BJ (cell line): ENCODE measurements at regions of chr20 and their contacts with region 1.

Region 1: DNA sequence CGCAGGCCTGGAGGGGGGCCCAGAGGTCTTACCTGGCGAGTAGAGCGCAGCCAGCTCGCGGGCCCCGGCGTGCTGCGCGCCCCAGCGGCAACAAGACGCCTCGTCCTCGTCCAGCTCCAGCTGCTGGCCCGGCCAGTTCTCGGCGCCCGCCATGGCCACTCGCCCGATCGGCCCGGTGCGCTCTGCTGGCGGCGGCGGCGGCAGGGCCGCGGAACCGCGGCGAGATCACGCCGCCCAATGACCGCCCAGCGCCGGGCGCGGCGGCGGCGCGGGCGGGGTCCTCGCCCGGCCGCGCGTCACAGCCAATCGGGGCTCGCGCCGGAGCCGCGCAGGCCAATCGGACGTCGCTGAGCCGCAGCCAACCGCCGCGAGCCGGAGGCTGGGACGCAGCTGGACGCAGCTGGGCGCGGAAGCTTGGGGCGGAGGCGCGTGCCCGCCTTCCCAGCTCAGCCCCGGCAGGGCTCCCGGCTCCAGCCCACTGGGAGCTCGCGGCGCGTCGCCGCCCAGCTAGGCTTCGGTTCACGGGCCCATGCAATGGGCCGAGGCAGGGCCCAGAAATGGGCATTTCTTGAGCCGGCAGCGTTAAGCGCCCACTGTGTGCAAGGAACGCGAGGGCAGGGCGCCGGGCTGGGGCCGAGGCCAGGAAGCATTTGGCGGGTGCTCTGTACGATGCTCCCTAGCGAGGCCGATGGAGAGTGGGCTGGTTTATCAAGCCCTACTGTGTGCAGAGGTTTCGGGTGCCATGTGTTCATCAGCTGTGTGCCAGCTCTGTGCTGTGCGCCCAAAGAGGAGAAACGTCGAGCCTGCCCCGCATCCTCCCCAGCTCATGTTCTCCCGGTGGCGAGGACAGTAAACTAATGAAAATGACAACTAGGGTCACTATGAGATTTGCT is at the start of gene PEDS1:
- DNase-seq: no peak
- H3K4me3 ChIP-seq: peak within 1 kb of the TSS; percentile 98
- H3K27me3 ChIP-seq: no peaks in the 10 kb centered on the region
- CTCF ChIP-seq: no peak
- polyA plus RNA-seq, gene PEDS1: 26.1 and 52.3 TPM in 2 replicates

Region 2: DNA sequence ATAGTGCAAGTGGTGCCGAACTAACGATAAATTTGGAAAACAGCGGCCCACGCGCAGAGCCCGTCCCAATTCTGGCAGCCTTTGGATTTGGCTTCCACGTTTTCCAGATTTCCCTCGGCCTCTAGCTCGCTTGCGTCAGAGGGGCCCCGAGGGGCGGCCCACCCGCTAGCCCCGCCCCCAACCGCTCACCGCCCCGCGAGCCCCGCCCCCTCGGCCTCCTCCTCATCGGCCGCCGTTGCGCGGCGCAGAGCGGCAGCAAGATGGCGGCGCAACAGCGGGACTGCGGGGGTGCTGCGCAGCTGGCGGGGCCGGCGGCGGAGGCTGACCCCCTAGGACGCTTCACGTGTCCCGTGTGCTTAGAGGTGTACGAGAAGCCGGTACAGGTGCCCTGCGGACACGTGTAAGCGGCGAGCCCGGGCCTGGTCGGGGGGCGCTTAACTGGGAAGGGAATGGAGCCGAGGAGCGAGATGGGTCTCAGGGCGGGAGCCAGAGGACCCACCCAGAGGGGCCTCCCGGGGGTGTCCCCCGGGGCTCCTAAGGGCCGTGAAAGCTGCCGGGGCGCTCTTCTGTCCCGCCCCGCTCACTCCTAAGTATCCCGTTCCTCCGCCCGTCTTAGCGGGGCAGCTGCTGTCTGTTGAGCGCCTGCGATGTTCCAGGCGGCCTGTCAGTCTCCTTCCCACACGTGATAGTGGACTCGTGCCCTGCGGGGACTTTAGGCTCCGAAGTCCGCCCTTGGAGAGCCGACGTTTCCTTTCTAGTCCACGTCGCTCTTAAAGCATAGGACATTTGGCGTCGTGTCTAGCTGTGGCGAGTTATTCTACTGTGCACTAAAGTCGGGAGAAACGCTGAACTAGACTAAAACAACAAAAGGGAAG is 217.3 kb before region 1 on chr20 and contains the start of gene RNF114:
- CTCF ChIA-PET with region 1: no interaction called
- POLR2A ChIA-PET with region 1: interaction called, 12 read pairs
- DNase-seq: no peak
- H3K4me3 ChIP-seq: peak within 1 kb of the TSS; percentile 96
- H3K27me3 ChIP-seq: no peaks in the 10 kb centered on the region
- CTCF ChIP-seq: no peak
- polyA plus RNA-seq, gene RNF114: 53.6 and 54.1 TPM in 2 replicates